ENCODE measurements at regions of chr7 and their contacts with region 1.

Region 1: DNA sequence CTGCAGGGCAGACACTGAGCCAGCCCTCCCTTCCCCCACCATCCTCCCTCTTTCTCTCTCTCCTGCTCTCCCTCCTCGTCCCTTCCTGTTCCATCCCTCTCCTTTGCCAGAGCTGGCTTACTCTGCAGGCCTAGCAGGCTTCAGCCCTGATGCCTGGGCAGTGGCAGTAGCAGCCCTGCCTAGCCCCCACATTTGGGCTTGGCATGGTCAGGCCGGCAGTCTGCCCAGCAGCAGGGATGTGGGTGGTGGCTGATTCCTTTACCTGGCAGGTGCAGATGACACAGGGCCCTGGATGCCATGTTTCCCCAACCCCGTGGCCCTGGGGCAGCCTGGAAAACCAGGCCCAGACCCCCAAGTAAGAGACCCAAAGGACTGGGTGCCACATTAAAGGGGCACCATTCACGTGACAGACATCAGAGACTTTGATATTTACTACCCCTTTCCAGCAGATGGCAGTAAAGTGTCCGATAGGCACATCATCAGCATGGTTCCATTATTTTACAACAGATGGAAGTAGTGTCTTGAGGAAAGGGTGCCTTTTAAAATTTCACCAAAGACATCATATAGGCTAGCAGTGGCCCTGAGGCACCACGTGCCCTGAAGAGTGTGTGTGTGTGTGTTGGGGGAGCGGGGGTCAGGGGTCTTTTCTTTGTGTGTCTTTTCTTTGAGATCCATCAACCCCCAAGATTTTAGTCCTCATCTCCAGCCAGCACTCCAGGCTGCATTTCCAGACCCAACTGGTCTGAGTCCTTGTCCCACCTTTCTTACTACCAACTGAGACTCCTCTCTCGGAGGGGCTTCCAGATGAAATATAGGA is 5.9 kb downstream of the KCP start:
- DNase-seq: peak in 7 of 9 donors; percentile 33 to 68 (median 57)
- ATAC-seq: peak; percentile 86
- H3K4me3 ChIP-seq: no peak overlapping the region
- H3K4me3 Mint-ChIP-seq: no peak overlapping the region
- H3K27ac ChIP-seq: no peak overlapping the region
- H3K27ac Mint-ChIP-seq: peak overlapping the region in 1 of 9 donors; percentile 41
- H3K4me1 ChIP-seq: no peaks in the 10 kb centered on the region
- H3K4me1 Mint-ChIP-seq: peaks cover 0 to 8% (median 0%) of the 10 kb centered on the region in 7 donors
- H3K27me3 ChIP-seq: no peaks in the 10 kb centered on the region
- H3K27me3 Mint-ChIP-seq: peaks cover 25 to 45% (median 30%) of the 10 kb centered on the region in 5 donors

Region 2: GRCh38 chr7:128859232-128860157 is 45.1 kb before region 1 on chr7:
- CTCF ChIA-PET with region 1: no interaction called
- POLR2A ChIA-PET with region 1: no interaction called
- intact Hi-C with region 1: no loop called
- DNase-seq: no peak
- ATAC-seq: no peak
- H3K4me3 ChIP-seq: no peak overlapping the region
- H3K4me3 Mint-ChIP-seq: no peak overlapping the region
- H3K27ac ChIP-seq: no peak overlapping the region
- H3K27ac Mint-ChIP-seq: no peak overlapping the region
- H3K4me1 ChIP-seq: peaks cover 12 to 15% of the 10 kb centered on the region in 2 donors
- H3K4me1 Mint-ChIP-seq: peaks cover 7 to 24% (median 17%) of the 10 kb centered on the region in 7 donors
- H3K27me3 ChIP-seq: no peaks in the 10 kb centered on the region
- H3K27me3 Mint-ChIP-seq: peaks cover 0 to 2% (median 0%) of the 10 kb centered on the region in 5 donors

Region 3: DNA sequence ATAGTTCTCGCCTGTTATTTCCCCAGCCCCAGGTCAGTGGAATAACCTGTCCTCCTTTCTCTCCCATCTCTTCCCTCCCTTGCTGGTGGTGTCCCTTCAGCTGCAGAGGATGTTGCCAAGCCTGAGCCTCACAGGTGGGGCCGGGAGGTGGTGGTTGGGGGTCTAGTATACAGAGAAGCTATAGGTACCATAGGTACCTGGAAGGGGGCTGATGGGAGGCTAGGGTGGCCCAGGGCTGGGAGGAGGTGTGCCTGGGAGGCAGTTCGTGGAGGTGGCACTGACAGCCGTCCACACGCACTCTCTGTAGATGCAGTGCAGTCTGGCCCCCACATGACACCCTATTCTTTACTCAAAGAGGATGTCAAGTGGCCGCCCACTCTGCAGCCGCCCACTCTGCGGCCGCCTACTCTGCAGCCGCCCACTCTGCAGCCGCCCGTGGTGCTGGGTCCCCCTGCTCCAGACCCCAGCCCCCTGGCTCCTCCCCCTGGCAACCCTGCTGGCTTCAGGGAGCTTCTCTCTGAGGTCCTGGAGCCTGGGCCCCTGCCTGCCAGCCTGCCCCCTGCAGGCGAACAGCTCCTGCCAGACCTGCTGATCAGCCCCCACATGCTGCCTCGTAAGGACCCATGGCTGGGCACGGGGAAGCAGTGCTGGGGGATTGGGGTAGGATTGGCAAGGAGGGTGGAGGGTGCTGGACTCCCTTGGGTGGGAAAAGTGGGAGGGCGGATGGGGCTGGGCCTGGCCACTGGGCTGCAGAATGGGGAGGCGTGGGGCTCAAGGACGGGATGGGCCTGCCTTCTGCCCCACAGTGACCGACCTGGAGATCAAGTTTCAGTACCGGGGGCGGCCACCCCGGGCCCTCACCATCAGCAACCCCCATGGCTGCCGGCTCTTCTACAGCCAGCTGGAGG is 42.6 kb after region 1 on chr7:
- CTCF ChIA-PET with region 1: no interaction called
- POLR2A ChIA-PET with region 1: no interaction called
- intact Hi-C with region 1: loop called (anchors 2 to 5 kb)
- DNase-seq: no peak
- ATAC-seq: peak; percentile 41
- H3K4me3 ChIP-seq: no peak overlapping the region
- H3K4me3 Mint-ChIP-seq: no peak overlapping the region
- H3K27ac ChIP-seq: no peak overlapping the region
- H3K27ac Mint-ChIP-seq: peak overlapping the region in 1 of 9 donors; percentile 13
- H3K4me1 ChIP-seq: no peaks in the 10 kb centered on the region
- H3K4me1 Mint-ChIP-seq: no peaks in the 10 kb centered on the region
- H3K27me3 ChIP-seq: no peaks in the 10 kb centered on the region
- H3K27me3 Mint-ChIP-seq: no peaks in the 10 kb centered on the region